ENCODE measurements at regions of chr2 and their contacts with region 1.

Region 1: GRCh38 chr2:201860636-201861066 is 54.3 kb downstream of the CDK15 start:
- DNase-seq: peak; percentile 81
- H3K4me3 ChIP-seq: no peak overlapping the region
- H3K27ac ChIP-seq: no peak overlapping the region
- H3K4me1 ChIP-seq: peaks cover 15% of the 10 kb centered on the region
- H3K27me3 ChIP-seq: peaks cover 4 to 11% of the 10 kb centered on the region in 2 experiments
- CTCF ChIP-seq: peak; percentile 69 to 74
- POLR2A ChIP-seq: no peak

Region 2: DNA sequence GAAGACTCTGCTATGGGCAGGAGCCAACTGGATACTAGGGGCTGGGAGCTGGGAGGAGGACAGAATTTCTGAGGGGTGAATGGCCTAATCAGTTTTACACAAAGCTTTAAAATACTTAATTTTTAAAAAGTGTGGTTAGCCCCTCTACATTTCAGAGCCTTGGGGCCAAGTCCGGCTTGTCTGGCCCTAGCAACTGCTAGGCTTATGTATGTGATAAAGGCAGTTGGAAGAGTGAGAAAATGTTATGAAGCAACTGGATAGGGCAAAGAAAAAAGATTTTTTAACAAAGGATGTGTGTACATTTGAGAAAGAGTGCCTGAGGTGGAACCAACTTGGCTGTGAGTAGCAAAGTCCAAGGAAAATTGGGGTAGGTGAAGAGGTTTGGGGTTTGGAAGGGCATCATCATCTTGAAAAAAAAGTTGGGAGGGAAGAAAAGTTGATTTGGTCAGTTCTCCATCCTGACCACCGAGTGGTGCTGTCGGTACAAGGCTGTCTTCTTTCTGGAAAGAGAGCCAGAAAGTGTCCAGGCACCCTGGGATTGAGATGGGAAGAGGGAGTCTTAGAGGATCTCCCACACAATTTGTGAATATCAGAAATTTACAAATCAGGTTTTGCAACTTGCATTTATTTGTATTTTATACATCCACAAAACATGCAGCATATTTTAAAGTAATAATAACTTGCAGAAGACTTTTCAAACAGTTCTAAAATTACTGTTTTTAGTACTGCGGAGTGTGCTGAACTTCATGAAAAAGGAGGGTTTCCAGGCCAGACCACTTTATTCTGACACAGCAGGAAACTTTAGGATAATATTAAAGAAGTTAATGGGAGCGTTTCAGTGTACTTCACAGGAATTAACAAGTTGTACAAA is 64.8 kb before region 1 on chr2:
- CTCF ChIA-PET with region 1: interaction called, 8 read pairs
- POLR2A ChIA-PET with region 1: no interaction called
- dilution Hi-C with region 1: no loop called
- intact Hi-C with region 1: loop called (anchors 5 kb)
- DNase-seq: peak; percentile 44
- H3K4me3 ChIP-seq: no peak overlapping the region
- H3K27ac ChIP-seq: no peak overlapping the region
- H3K4me1 ChIP-seq: peaks cover 14% of the 10 kb centered on the region
- H3K27me3 ChIP-seq: no peaks in the 10 kb centered on the region
- CTCF ChIP-seq: peak; percentile 71
- POLR2A ChIP-seq: no peak

Region 3: DNA sequence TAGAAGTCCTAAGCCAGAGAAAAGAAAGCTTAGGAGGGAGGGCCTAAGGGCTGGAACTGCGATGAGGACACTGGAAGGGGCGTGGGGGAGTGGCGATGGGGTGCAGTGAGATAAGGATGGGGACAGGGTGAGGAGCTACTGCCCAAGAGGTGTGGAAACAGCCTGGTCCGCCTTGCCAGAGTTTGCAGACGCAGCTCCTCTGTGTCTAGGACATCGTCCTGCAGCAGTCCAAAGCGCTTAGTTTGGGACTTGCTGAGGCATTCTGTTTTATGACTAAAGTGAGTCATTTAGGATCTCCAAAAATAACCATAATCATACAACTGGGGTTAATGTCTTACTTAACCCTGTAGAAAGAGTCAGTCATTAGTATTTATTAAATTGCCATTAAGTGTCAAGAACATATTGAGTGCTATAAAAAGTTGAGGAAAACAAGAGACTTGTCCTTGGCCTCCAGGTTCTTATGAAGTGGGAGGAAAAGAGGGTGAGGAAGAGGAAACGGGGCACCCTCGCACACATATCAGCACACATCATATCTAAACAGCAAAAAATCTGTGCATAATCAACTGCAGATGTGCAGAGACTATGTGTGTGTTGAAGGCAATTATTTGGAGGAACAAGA is 20.5 kb after region 1 on chr2:
- CTCF ChIA-PET with region 1: interaction called, 22 read pairs
- POLR2A ChIA-PET with region 1: no interaction called
- dilution Hi-C with region 1: no loop called
- intact Hi-C with region 1: no loop called
- DNase-seq: no peak
- H3K4me3 ChIP-seq: no peak overlapping the region
- H3K27ac ChIP-seq: no peak overlapping the region
- H3K4me1 ChIP-seq: no peaks in the 10 kb centered on the region
- H3K27me3 ChIP-seq: peaks cover 43 to 44% of the 10 kb centered on the region in 2 experiments
- CTCF ChIP-seq: no peak
- POLR2A ChIP-seq: no peak

Region 4: DNA sequence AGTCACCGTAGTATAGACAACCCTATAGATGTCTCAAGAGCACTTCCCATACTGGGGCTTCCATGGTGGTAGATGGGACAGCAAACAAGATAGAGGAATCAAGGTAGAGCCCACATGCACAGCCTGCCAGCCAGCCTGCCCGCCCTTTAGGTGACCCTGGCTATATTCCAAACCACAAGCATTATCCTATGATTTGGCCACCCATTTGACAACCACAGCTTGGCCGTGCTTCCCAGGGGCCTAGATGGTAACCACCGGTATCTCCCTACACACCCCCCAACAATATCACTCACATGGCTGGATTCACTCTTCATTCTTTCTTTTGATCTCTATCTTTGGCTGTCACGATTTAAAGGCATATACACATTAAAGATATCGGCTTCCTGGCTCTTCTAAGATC is 31.0 kb after region 1 on chr2:
- CTCF ChIA-PET with region 1: interaction called, 22 read pairs
- POLR2A ChIA-PET with region 1: no interaction called
- dilution Hi-C with region 1: no loop called
- intact Hi-C with region 1: no loop called
- DNase-seq: no peak
- H3K4me3 ChIP-seq: no peak overlapping the region
- H3K27ac ChIP-seq: no peak overlapping the region
- H3K4me1 ChIP-seq: no peaks in the 10 kb centered on the region
- H3K27me3 ChIP-seq: peaks cover 9 to 31% of the 10 kb centered on the region in 2 experiments
- CTCF ChIP-seq: no peak
- POLR2A ChIP-seq: no peak

Region 5: GRCh38 chr2:202056392-202057010 is 195.8 kb after region 1 on chr2:
- CTCF ChIA-PET with region 1: interaction called, 28 read pairs
- POLR2A ChIA-PET with region 1: no interaction called
- dilution Hi-C with region 1: no loop called
- intact Hi-C with region 1: loop called (anchors 1 kb)
- DNase-seq: no peak
- H3K4me3 ChIP-seq: no peak overlapping the region
- H3K27ac ChIP-seq: no peak overlapping the region
- H3K4me1 ChIP-seq: no peaks in the 10 kb centered on the region
- H3K27me3 ChIP-seq: peaks cover 10 to 19% of the 10 kb centered on the region in 2 experiments
- CTCF ChIP-seq: no peak
- POLR2A ChIP-seq: no peak

Region 6: GRCh38 chr2:202104278-202104870 is 243.7 kb after region 1 on chr2:
- CTCF ChIA-PET with region 1: interaction called, 11 read pairs
- POLR2A ChIA-PET with region 1: no interaction called
- dilution Hi-C with region 1: no loop called
- intact Hi-C with region 1: no loop called
- DNase-seq: peak; percentile 24
- H3K4me3 ChIP-seq: no peak overlapping the region
- H3K27ac ChIP-seq: no peak overlapping the region
- H3K4me1 ChIP-seq: no peaks in the 10 kb centered on the region
- H3K27me3 ChIP-seq: peaks cover 13 to 30% of the 10 kb centered on the region in 2 experiments
- CTCF ChIP-seq: peak; percentile 69 to 74
- POLR2A ChIP-seq: no peak

Region 7: DNA sequence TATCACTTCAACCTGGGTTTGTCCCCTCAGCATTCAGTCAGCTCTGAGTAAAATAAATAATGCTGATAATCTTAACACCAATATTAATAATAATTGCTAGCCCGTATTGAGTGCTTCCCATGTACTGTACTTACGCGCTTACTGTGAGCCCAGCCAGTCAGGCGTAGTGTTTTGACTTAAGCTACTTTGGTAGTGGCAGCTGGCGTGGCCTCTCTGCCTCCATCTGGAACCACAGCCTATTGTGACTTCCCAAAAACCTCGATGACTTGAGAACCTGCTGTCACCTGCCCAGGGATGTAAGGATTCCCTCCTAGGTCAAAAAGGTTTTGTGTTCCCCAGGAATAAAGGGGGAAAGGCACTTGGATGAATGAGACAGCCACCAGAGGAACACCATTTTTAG is 324.5 kb after region 1 on chr2:
- CTCF ChIA-PET with region 1: interaction called, 92 read pairs
- POLR2A ChIA-PET with region 1: no interaction called
- dilution Hi-C with region 1: no loop called
- intact Hi-C with region 1: no loop called
- DNase-seq: peak; percentile 9
- H3K4me3 ChIP-seq: no peak overlapping the region
- H3K27ac ChIP-seq: no peak overlapping the region
- H3K4me1 ChIP-seq: peaks cover 8% of the 10 kb centered on the region
- H3K27me3 ChIP-seq: no peaks in the 10 kb centered on the region
- CTCF ChIP-seq: no peak
- POLR2A ChIP-seq: no peak

Measured in endothelial cell of umbilical vein (primary cell).